K562 (cell line): ENCODE measurements at regions of chr6 and their contacts with region 1.

Region 1: DNA sequence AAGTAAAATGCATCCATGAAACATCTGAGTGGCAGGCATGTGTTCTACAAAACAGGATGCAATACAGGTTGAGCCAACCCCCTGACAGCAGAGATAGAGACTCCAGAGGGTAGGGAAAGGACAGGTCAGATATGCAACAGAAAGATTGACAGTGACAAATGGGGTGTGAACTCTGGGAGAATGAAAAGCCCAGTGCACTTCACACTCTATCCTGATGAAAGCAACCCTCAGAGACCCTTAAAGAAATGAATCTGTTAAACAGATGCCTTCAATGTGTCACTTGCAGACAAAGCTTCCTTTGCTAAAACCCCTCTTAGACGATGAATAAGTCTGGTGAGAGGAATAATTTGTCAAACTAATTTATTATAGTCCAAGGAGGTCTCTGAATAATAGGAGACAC is 89.9 kb downstream of the RFPL4B start:
- DNase-seq: no peak
- ATAC-seq: no peak
- H3K4me3 ChIP-seq: no peak overlapping the region
- H3K27ac ChIP-seq: no peak overlapping the region
- H3K4me1 ChIP-seq: no peaks in the 10 kb centered on the region
- H3K27me3 ChIP-seq: no peaks in the 10 kb centered on the region
- CTCF ChIP-seq: no peak
- EP300 ChIP-seq: no peak
- POLR2A ChIP-seq: no peak
- RAD21 ChIP-seq: no peak

Region 2: GRCh38 chr6:112416866-112417265 is 20.2 kb before region 1 on chr6:
- CTCF ChIA-PET with region 1: no interaction called
- POLR2A ChIA-PET with region 1: no interaction called
- in situ Hi-C with region 1: no loop called
- intact Hi-C with region 1: loop called (anchors 1 kb)
- DNase-seq: no peak
- ATAC-seq: no peak
- H3K4me3 ChIP-seq: no peak overlapping the region
- H3K27ac ChIP-seq: no peak overlapping the region
- H3K4me1 ChIP-seq: no peaks in the 10 kb centered on the region
- H3K27me3 ChIP-seq: no peaks in the 10 kb centered on the region
- CTCF ChIP-seq: no peak
- EP300 ChIP-seq: no peak
- POLR2A ChIP-seq: no peak
- RAD21 ChIP-seq: no peak

Region 3: DNA sequence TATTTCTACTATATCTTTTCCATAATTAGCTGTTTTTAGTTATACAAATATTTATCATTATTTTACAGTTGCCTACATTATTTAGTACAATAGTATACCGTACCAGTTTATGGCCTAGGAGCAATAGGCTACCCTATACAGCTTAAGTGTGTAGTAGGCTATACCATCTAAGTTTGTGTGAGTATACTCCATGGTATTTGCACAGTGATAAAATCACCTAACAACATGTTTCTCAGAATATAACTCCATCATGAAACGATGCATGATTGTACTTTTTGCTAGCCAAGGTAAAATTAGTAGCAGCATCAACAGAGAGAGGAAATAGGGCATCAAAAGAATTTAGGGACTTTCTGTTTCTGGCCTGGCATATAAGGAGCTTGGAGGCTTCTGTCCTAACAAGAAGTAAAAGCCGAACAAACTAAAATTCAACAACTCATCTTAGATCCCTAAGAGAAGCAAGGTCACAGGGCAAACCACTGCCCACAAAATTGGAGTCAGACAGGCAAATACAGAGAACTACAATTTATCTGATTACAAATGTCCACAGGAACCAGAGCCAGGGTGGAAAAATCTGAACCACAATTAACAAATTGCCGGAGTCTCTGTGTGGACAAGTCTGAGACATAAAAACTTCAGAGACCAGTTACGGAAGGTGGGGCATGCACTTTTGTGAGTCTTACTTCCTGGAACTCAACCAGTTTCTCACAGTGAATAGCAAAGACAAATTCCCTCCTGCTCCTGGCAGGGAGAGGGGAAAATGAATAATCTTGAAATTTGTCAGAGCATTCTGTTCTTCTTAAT is 581.5 kb after region 1 on chr6:
- CTCF ChIA-PET with region 1: no interaction called
- POLR2A ChIA-PET with region 1: no interaction called
- in situ Hi-C with region 1: no loop called
- intact Hi-C with region 1: no loop called
- DNase-seq: peak in 1 of 4 experiments; percentile 11
- ATAC-seq: peak; percentile 48
- H3K4me3 ChIP-seq: no peak overlapping the region
- H3K27ac ChIP-seq: no peak overlapping the region
- H3K4me1 ChIP-seq: no peaks in the 10 kb centered on the region; a peak in 1 of 5 replicates
- H3K27me3 ChIP-seq: no peaks in the 10 kb centered on the region
- CTCF ChIP-seq: no peak
- EP300 ChIP-seq: no peak
- POLR2A ChIP-seq: no peak
- RAD21 ChIP-seq: no peak